ENCODE measurements at regions of chr1 and their contacts with region 1.

Region 1: GRCh38 chr1:226827968-226828513 is 42.4 kb upstream of the PSEN2 start:
- DNase-seq: peak; percentile 73 to 91
- H3K4me3 ChIP-seq: no peak overlapping the region
- H3K27ac ChIP-seq: no peak overlapping the region
- H3K4me1 ChIP-seq: peaks cover 21% of the 10 kb centered on the region
- H3K27me3 ChIP-seq: no peaks in the 10 kb centered on the region
- CTCF ChIP-seq: peak; percentile 92

Region 2: GRCh38 chr1:226424228-226425003 is 403.6 kb before region 1 on chr1:
- CTCF ChIA-PET with region 1: no interaction called
- POLR2A ChIA-PET with region 1: no interaction called
- intact Hi-C with region 1: loop called (anchors 1 kb)
- DNase-seq: peak in 1 of 2 experiments; percentile 47
- H3K4me3 ChIP-seq: no peak overlapping the region
- H3K27ac ChIP-seq: no peak overlapping the region
- H3K4me1 ChIP-seq: no peaks in the 10 kb centered on the region
- H3K27me3 ChIP-seq: no peaks in the 10 kb centered on the region; the same call in 1 of the 2 replicates
- CTCF ChIP-seq: peak; percentile 77

Region 3: DNA sequence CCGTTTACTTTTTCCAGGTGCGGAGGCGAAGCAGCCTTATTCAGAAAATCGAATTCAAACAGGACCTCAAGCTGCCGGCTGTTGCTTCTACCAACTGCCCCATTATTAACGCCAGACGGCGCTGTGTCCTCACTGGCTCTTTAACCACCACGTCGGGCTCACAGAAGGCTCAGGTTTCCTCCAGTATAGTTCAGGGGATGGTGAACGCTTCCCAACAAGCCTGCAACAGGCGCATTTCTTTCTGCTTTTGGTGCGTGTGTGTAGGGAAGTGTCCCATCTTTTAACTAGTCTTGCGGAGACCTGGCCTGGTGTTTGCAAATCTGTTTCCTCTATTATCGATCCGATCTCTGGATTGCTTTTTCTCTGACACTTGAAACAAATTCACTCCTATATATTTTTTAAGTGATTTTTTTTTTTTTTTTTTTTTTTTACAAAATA is 280.3 kb before region 1 on chr1:
- CTCF ChIA-PET with region 1: interaction called, 9 read pairs
- POLR2A ChIA-PET with region 1: no interaction called
- intact Hi-C with region 1: loop called (anchors 1 kb)
- DNase-seq: peak; percentile 67 to 82
- H3K4me3 ChIP-seq: no peak overlapping the region
- H3K27ac ChIP-seq: no peak overlapping the region
- H3K4me1 ChIP-seq: no peaks in the 10 kb centered on the region
- H3K27me3 ChIP-seq: peaks cover 8% of the 10 kb centered on the region; the same call in 1 of the 2 replicates
- CTCF ChIP-seq: peak; percentile 85

Region 4: GRCh38 chr1:226634166-226634588 is 193.9 kb before region 1 on chr1:
- CTCF ChIA-PET with region 1: no interaction called
- POLR2A ChIA-PET with region 1: no interaction called
- intact Hi-C with region 1: loop called (anchors 1 kb)
- DNase-seq: peak in 1 of 2 experiments; percentile 75
- H3K4me3 ChIP-seq: no peak overlapping the region
- H3K27ac ChIP-seq: no peak overlapping the region
- H3K4me1 ChIP-seq: peaks cover 22% of the 10 kb centered on the region
- H3K27me3 ChIP-seq: no peaks in the 10 kb centered on the region
- CTCF ChIP-seq: peak; percentile 96

Region 5: GRCh38 chr1:227043755-227044154 is 215.7 kb after region 1 on chr1:
- CTCF ChIA-PET with region 1: no interaction called
- POLR2A ChIA-PET with region 1: no interaction called
- intact Hi-C with region 1: no loop called
- DNase-seq: no peak
- H3K4me3 ChIP-seq: no peak overlapping the region
- H3K27ac ChIP-seq: no peak overlapping the region; the same call in 1 of the 2 replicates
- H3K4me1 ChIP-seq: no peaks in the 10 kb centered on the region
- H3K27me3 ChIP-seq: no peaks in the 10 kb centered on the region
- CTCF ChIP-seq: no peak

Region 6: GRCh38 chr1:227449051-227449450 is 621.0 kb after region 1 on chr1:
- CTCF ChIA-PET with region 1: no interaction called
- POLR2A ChIA-PET with region 1: no interaction called
- intact Hi-C with region 1: loop called (anchors 10 kb)
- DNase-seq: peak in 1 of 2 experiments; percentile 43
- H3K4me3 ChIP-seq: no peak overlapping the region
- H3K27ac ChIP-seq: no peak overlapping the region
- H3K4me1 ChIP-seq: no peaks in the 10 kb centered on the region
- H3K27me3 ChIP-seq: peaks cover 11% of the 10 kb centered on the region; the same call in 1 of the 2 replicates
- CTCF ChIP-seq: peak; percentile 49; the same call in 1 of the 2 replicates

Measured in PC-9 (cell line).